Activated B cell treated with CpG ODN at 0.5 μM for 24 hours (primary cell): ENCODE measurements at regions of chr2 and their contacts with region 1.

Region 1: DNA sequence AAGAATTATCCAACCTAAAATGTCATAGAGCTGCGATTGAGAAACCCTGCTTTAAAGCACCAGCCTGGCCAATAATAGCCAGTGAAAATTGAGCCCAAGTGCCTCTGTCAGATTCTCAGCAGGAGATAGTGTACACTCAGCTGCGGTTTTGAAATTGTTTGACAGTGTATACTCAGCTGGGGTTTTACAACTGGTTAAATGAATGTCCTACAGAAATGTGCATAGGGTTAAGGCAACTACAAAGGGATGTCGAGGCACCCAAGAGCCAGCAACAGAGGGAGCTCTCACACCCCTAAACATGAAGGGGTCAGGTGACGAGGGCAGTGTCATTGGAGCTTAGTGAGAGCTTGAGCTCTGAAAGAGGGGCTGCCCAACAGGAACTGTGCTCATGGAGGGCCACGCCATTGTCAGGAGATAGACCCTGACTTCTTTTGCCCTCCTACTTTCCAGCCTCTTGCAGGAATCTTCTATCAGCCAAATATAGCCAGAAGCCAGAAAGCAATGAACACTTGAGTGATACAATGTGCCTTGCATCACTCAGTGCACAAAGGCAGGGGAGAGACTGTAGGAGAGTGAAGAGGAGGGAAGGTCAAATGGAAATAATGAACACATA is 15.1 kb downstream of the ACTG2 start:
- DNase-seq: peak; percentile 23
- ATAC-seq: peak; percentile 93
- H3K4me3 Mint-ChIP-seq: no peak overlapping the region
- H3K27ac Mint-ChIP-seq: no peak overlapping the region
- H3K4me1 Mint-ChIP-seq: peaks cover 2% of the 10 kb centered on the region
- H3K27me3 Mint-ChIP-seq: no peaks in the 10 kb centered on the region
- CTCF ChIP-seq: no peak

Region 2: GRCh38 chr2:73451263-73451972 is 456.5 kb before region 1 on chr2:
- CTCF ChIA-PET with region 1: no interaction called
- POLR2A ChIA-PET with region 1: no interaction called
- intact Hi-C with region 1: no loop called
- DNase-seq: no peak
- ATAC-seq: peak; percentile 28
- H3K4me3 Mint-ChIP-seq: no peak overlapping the region
- H3K27ac Mint-ChIP-seq: no peak overlapping the region
- H3K4me1 Mint-ChIP-seq: peaks cover 7% of the 10 kb centered on the region
- H3K27me3 Mint-ChIP-seq: no peaks in the 10 kb centered on the region
- CTCF ChIP-seq: no peak

Region 3: DNA sequence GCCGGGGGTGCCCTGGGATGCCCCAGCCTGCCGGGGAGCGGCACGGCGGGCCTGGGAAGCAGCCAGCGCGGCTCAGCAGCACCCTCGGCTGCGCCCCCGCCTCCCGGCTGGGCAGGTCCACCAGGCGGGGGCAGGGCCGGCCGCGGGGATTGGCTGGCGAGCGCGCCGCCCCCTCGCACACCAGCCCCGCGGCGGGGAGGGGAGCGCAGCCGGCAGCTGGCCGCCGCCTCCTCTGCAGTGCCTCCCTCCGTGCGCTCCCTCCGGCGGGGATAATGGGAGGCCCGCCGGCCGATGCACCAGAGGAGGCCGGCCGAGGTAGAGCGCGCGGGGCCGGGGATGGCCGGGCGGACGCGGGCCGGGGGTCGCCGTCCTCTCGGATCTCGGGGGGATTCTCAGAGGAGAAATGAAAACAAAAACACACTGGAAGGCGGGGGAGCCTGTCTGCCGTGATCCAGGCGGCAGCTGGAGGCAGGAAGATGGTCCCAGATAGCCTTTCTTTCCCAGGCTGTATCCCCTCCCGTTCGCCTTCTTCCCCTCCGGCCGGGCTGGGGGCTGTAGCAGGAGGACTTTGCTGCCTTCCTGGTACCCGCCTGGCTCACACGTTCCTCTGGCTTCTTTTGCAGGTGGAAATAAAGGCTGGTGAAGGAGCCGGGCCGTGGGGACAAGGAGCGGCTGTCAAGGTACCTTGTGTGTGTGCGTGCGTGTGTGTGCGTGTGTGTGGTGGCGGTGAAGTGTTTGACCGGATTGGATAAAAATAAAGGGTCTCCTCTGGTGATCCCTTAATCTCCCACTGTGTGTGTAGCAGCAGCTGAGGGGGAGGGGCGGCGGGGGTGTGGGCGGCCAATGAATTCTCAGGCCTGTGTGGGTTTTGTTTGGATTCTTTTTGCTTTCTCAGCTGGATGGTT is 94.8 kb after region 1 on chr2:
- CTCF ChIA-PET with region 1: no interaction called
- POLR2A ChIA-PET with region 1: no interaction called
- intact Hi-C with region 1: loop called (anchors 2 kb)
- DNase-seq: peak; percentile 78
- ATAC-seq: peak; percentile 91
- H3K4me3 Mint-ChIP-seq: peak overlapping the region; percentile 82
- H3K27ac Mint-ChIP-seq: peak overlapping the region; percentile 50
- H3K4me1 Mint-ChIP-seq: peaks cover 73% of the 10 kb centered on the region
- H3K27me3 Mint-ChIP-seq: no peaks in the 10 kb centered on the region
- CTCF ChIP-seq: no peak

Region 4: GRCh38 chr2:74080346-74080745 is 172.4 kb after region 1 on chr2:
- CTCF ChIA-PET with region 1: interaction called, 10 read pairs
- POLR2A ChIA-PET with region 1: no interaction called
- intact Hi-C with region 1: loop called (anchors 1 kb)
- DNase-seq: no peak
- ATAC-seq: peak; percentile 28
- H3K4me3 Mint-ChIP-seq: no peak overlapping the region
- H3K27ac Mint-ChIP-seq: peak overlapping the region; percentile 67
- H3K4me1 Mint-ChIP-seq: peaks cover 22% of the 10 kb centered on the region
- H3K27me3 Mint-ChIP-seq: no peaks in the 10 kb centered on the region
- CTCF ChIP-seq: no peak

Region 5: GRCh38 chr2:74104839-74105238 is 196.9 kb after region 1 on chr2:
- CTCF ChIA-PET with region 1: interaction called, 13 read pairs
- POLR2A ChIA-PET with region 1: interaction called, 3 read pairs
- intact Hi-C with region 1: loop called (anchors 1 kb)
- DNase-seq: no peak
- ATAC-seq: no peak
- H3K4me3 Mint-ChIP-seq: no peak overlapping the region
- H3K27ac Mint-ChIP-seq: no peak overlapping the region
- H3K4me1 Mint-ChIP-seq: no peaks in the 10 kb centered on the region
- H3K27me3 Mint-ChIP-seq: no peaks in the 10 kb centered on the region
- CTCF ChIP-seq: no peak

Region 6: DNA sequence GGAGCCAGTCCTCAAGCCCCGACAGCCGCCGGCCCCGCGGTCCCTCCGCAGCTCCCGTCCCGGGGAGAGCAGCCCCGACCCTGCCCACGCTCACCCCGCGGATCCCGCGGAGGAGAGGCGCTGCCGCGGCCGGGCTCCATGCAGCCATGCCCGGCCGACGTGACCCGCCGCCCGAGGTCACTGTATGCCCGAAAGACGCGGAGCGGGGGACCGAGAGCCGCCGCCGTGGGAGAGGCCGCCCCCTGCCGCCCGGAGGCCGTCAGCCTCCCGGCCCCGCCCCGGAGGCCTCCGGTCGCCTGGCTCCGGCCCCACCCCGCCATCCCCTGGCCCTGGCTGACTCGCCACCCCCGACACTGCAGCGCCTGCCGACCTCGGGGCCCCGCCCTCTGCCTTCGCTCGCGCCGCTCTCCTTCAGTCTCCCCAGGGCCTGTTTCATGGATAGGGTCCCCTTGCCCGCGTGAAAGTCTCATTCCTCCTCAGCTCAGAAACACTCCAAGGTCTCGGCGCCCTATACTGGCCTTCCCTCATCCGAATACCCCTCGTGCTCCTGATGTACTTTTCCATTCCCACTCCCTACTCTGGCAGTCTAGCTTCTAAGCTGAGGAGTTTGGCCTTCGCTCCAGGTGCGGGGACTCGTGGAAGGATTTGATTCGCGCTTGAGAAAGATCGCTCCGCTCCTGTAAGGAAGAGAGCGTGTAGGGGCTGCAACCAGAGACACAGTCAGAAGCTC is 239.9 kb after region 1 on chr2 and contains the start of gene BOLA3:
- CTCF ChIA-PET with region 1: interaction called, 23 read pairs
- POLR2A ChIA-PET with region 1: interaction called, 3 read pairs
- intact Hi-C with region 1: loop called (anchors 1 kb)
- DNase-seq: peak; percentile 86
- ATAC-seq: peak; percentile 97
- H3K4me3 Mint-ChIP-seq: no peak within 1 kb of the TSS
- H3K27ac Mint-ChIP-seq: no peak within 1 kb of the TSS
- H3K4me1 Mint-ChIP-seq: peaks cover 7% of the 10 kb centered on the region
- H3K27me3 Mint-ChIP-seq: no peaks in the 10 kb centered on the region
- CTCF ChIP-seq: no peak
- total RNA-seq, gene BOLA3: 18.8 and 19.1 TPM in 2 replicates

Region 7: DNA sequence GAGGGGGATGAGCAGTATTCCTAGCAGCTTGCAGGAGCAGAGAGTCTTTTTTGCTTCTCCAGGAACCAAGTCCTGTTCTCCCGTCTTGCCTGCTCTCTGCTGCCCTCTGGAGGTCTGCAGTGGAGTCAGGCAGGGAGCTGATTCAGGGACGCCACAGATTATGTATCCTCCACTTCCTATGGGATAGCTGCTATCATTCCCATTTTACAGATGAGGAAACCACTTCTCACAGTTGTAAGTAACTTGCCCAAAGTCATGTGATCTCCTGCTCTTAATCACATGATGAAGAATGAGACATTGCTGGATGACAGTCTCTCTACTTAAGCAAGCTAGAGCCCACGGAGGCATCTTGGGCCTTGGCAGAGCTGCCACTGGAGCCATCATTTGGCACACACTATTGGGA is 427.0 kb after region 1 on chr2:
- CTCF ChIA-PET with region 1: interaction called, 6 read pairs
- POLR2A ChIA-PET with region 1: no interaction called
- intact Hi-C with region 1: loop called (anchors 1 kb)
- DNase-seq: peak; percentile 62
- ATAC-seq: peak; percentile 66
- H3K4me3 Mint-ChIP-seq: no peak overlapping the region
- H3K27ac Mint-ChIP-seq: no peak overlapping the region
- H3K4me1 Mint-ChIP-seq: no peaks in the 10 kb centered on the region
- H3K27me3 Mint-ChIP-seq: no peaks in the 10 kb centered on the region
- CTCF ChIP-seq: peak; percentile 96